ENCODE measurements at regions of chr3 and their contacts with region 1.

Region 1: DNA sequence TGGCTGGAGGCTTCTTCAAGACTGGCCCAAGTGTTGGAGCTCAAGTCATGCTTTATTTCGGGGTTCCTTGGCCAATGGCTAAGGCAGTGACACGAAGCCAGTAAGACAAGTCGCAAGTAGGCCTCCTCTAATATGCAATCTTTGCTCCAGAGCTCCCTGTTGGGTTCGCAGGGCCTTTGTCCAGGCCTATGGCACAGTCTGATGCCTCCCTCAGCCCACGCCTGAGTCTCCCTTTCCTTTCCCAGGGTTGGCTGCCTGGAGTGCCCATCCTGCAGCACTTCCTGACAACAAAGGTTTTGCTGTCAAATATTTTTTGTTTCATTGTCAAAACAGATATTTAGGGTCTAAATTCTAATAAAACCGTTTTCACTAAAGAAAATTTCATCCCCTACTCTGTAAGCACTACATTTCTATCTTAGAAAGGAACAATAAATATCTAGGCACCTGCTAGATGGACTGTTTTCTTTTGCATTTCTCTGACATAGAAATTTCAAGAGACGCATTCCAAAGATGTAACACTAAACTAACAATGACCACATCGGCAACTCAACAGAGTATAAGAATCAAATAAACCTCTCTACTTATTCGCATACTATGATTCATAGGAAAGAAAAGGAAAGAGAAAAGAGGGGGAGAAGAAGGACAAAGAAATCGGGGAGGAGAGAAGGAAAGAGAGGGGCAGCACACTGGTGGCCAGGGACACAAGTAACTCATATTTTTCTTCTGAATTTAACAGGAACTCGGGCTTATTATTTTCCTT is 393.1 kb upstream of the ATP11B start:
- DNase-seq: no peak
- H3K4me3 ChIP-seq: no peak overlapping the region
- H3K27ac ChIP-seq: no peak overlapping the region
- H3K4me1 ChIP-seq: no peaks in the 10 kb centered on the region
- H3K27me3 ChIP-seq: no peaks in the 10 kb centered on the region
- CTCF ChIP-seq: no peak
- POLR2A ChIP-seq: no peak

Region 2: GRCh38 chr3:182445576-182446369 is 45.6 kb after region 1 on chr3:
- intact Hi-C with region 1: loop called (anchors 5 kb)
- DNase-seq: no peak
- H3K4me3 ChIP-seq: no peak overlapping the region
- H3K27ac ChIP-seq: no peak overlapping the region
- H3K4me1 ChIP-seq: no peaks in the 10 kb centered on the region
- H3K27me3 ChIP-seq: no peaks in the 10 kb centered on the region
- CTCF ChIP-seq: no peak
- POLR2A ChIP-seq: no peak

Measured in prostate gland (tissue), 2 donors.